Colonic mucosa (tissue), 4 donors: ENCODE measurements at regions of chr3 and their contacts with region 1.

Region 1: DNA sequence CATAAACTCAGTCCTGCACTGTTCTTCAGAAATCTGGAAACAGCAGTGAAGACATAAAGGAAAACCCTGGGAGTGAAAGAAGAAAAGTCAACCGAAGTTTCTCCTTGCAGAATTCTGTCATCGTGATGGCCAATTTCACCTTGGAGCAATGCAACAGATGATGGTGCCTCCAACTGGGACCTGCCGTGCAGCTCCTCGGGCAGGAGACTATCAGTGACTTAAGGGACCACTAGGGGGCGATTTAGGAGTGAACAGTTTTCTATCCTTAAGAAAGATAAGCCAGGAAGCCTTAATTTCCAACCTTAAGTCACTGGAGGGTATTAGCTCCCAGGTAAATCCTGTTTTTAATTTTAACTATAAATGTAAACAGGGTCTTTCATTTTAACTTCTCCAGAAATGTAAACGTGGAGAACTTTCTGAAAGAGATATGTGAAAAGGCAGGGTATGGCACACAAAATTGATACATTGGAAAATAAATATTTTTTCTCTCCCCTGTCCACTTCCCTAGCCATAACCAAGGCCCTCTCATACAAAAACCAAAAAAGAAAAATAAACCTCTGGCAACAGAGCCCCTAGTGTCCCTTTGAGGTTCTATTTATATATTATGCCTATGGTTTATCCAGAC is 116.3 kb downstream of the PDZRN3 start:
- DNase-seq: peak; percentile 80
- H3K4me3 ChIP-seq: no peak overlapping the region
- H3K27ac ChIP-seq: no peak overlapping the region
- H3K4me1 ChIP-seq: peaks cover 20% of the 10 kb centered on the region
- H3K27me3 ChIP-seq: no peaks in the 10 kb centered on the region
- CTCF ChIP-seq: peak; percentile 82

Region 2: GRCh38 chr3:73572368-73572767 is 63.9 kb after region 1 on chr3:
- intact Hi-C with region 1: loop called (anchors 5 kb)
- DNase-seq: peak; percentile 52
- H3K4me3 ChIP-seq: no peak overlapping the region
- H3K27ac ChIP-seq: no peak overlapping the region
- H3K4me1 ChIP-seq: peaks cover 5% of the 10 kb centered on the region
- H3K27me3 ChIP-seq: no peaks in the 10 kb centered on the region
- CTCF ChIP-seq: no peak

Region 3: GRCh38 chr3:73848173-73848906 is 339.9 kb after region 1 on chr3:
- intact Hi-C with region 1: loop called (anchors 2 kb)
- DNase-seq: no peak
- H3K4me3 ChIP-seq: no peak overlapping the region
- H3K27ac ChIP-seq: no peak overlapping the region
- H3K4me1 ChIP-seq: no peaks in the 10 kb centered on the region
- H3K27me3 ChIP-seq: no peaks in the 10 kb centered on the region
- CTCF ChIP-seq: peak; percentile 61